HepG2 (cell line): ENCODE measurements at regions of chr15 and their contacts with region 1.

Region 1: DNA sequence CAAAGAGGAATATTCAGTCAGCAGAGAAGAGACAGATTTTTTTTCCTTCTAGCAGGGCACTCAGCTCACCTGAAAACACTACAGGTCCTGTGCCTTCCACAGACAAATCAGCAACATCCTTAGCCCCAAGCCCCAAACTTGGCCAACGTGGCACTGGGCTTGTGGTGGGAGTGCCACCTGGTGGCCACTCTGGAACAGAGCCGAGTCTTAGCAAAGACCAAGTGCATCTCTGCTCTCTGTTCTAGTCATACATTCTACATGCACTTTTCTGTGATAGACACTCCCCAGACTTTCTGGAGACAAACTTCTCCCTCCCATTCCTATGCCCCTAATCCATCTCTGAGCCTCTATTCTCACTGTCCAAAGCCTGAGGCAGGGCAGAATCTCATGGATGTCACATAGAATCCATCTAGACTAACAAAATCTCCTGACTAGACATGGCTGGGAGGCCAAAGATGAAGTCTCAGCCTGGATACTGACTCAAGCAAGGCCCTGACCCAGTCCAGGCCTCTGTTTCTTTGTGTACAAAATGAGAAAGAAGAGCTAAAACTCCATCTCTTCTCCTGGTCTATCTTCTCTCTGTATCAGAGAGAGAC is 5.1 kb upstream of the SEMA7A start:
- DNase-seq: peak; percentile 69
- ATAC-seq: 0 out of 3 replicates have a peak, but pooled peaks have one; percentile 7
- H3K4me3 ChIP-seq: no peak overlapping the region
- H3K27ac ChIP-seq: no peak overlapping the region
- H3K4me1 ChIP-seq: peaks cover 76% of the 10 kb centered on the region
- H3K27me3 ChIP-seq: no peaks in the 10 kb centered on the region
- CTCF ChIP-seq: peak; percentile 97
- EP300 ChIP-seq: no peak
- POLR2A ChIP-seq: no peak
- RAD21 ChIP-seq: peak; percentile 92

Region 2: DNA sequence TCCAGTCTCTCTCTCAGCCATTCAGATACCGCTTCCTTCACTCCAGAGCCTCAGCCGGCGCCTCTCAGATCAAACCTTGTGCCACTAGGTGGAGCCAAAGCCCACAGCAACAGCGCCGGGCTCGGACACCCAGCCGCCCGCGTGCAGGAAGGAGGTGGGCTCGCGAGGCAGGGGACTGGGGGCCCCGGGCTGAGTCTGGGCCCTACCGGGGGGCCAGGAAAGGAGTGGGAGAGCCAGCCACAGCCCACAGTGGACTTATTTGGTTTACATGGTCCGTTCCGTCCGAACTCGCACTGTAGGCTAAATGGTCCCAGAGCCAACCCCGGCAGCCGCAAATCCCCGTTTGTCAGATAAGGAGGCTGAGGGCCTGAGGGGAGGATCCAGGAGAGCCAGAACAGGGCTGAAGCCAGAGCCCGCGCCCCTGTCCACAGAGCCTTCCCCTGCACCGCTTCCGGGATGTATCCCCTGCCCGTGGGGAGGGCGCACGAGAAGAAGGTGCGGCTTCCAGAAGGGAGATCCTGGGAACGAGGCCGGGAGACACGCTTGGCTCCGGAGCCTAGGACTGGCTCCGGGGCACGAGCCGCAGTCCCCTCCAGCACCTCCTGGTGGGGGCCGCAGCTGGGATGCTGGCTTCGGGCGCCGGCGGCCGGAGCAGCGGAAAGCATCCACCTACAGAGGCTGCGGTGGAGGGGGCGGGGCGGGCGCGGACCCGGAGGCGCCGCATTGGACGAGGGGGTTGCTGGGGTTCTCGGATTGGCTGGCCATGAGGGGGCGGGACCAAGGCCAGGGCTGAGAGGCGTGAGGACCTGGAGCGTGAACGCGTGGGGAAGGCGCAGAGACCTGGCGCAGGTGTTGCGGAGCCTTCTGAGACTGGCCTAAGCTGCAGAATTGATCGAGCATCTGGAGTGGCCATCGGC is 64.8 kb before region 1 on chr15:
- CTCF ChIA-PET with region 1: interaction called, 21 read pairs
- POLR2A ChIA-PET with region 1: interaction called, 4 read pairs
- in situ Hi-C with region 1: no loop called
- intact Hi-C with region 1: no loop called
- DNase-seq: peak; percentile 83
- ATAC-seq: peak; percentile 96
- H3K4me3 ChIP-seq: peak overlapping the region; percentile 62 to 77 (median 66)
- H3K27ac ChIP-seq: no peak overlapping the region
- H3K4me1 ChIP-seq: peaks cover 32% of the 10 kb centered on the region
- H3K27me3 ChIP-seq: peaks cover 0 to 32% of the 10 kb centered on the region in 2 experiments; a peak in 4 of 5 replicates
- CTCF ChIP-seq: peak; percentile 97
- EP300 ChIP-seq: no peak
- POLR2A ChIP-seq: no peak
- RAD21 ChIP-seq: peak; percentile 94

Region 3: DNA sequence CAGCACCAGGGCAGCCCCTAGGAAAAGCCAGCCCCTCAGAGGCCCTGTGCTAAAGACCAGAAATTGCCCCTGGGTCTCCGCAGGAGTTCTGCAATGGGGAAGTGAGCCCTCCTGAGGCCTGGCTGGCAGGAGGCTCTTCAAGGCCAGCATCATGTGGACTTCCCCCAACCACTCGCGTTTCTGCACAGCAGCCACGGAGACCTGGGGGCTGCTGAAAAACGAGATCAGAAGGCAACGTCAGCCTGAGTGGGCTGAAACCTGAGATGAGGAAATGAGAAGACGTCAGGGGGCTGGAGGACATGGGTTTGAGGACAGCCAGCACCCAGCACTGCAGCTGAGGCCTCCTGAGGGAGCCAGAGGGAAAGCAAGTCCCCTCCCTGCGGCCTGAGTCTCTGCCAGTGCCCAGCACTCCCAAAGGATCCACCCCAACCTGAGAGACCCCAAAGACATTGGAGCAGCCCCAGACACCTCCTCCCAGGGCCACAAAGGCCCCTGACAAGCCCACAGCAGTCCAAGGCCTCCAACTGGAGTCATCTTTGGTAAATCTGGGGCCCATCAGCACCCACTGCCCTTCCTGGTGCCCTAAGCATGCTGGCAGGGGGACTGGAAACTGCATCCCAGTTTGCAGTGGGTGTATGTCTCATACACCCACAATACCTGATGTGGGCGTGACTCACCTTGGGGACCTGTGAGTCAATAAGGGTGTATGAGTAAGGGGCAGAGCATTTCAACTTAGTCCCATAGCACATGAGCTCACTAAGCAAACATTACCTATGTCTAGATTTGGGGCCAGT is 42.2 kb before region 1 on chr15:
- CTCF ChIA-PET with region 1: no interaction called
- POLR2A ChIA-PET with region 1: interaction called, 20 read pairs
- in situ Hi-C with region 1: no loop called
- intact Hi-C with region 1: no loop called
- DNase-seq: peak; percentile 84
- ATAC-seq: peak; percentile 65
- H3K4me3 ChIP-seq: peak overlapping the region in 1 of 3 experiments; percentile 34; a peak in 1 of 6 replicates
- H3K27ac ChIP-seq: no peak overlapping the region
- H3K4me1 ChIP-seq: peaks cover 52% of the 10 kb centered on the region
- H3K27me3 ChIP-seq: peaks cover 5 to 55% of the 10 kb centered on the region in 2 experiments; a peak in 3 of 5 replicates
- CTCF ChIP-seq: peak; percentile 44
- EP300 ChIP-seq: peak in 1 of 2 experiments; percentile 44; a peak in 1 of 4 replicates
- POLR2A ChIP-seq: no peak
- RAD21 ChIP-seq: no peak

Region 4: GRCh38 chr15:74422650-74423430 is 16.0 kb before region 1 on chr15:
- CTCF ChIA-PET with region 1: no interaction called
- POLR2A ChIA-PET with region 1: interaction called, 140 read pairs
- in situ Hi-C with region 1: no loop called
- intact Hi-C with region 1: no loop called
- DNase-seq: peak; percentile 82
- ATAC-seq: peak; percentile 68
- H3K4me3 ChIP-seq: peak overlapping the region in 1 of 3 experiments; percentile 30; a peak in 2 of 6 replicates
- H3K27ac ChIP-seq: peak overlapping the region; percentile 74
- H3K4me1 ChIP-seq: peaks cover 98% of the 10 kb centered on the region
- H3K27me3 ChIP-seq: no peaks in the 10 kb centered on the region
- CTCF ChIP-seq: 0 out of 2 replicates have a peak, but pooled peaks have one; percentile 9
- EP300 ChIP-seq: peak in 1 of 2 experiments; percentile 23; a peak in 1 of 4 replicates
- POLR2A ChIP-seq: no peak
- RAD21 ChIP-seq: no peak; the same call in 1 of the 2 replicates

Region 5: DNA sequence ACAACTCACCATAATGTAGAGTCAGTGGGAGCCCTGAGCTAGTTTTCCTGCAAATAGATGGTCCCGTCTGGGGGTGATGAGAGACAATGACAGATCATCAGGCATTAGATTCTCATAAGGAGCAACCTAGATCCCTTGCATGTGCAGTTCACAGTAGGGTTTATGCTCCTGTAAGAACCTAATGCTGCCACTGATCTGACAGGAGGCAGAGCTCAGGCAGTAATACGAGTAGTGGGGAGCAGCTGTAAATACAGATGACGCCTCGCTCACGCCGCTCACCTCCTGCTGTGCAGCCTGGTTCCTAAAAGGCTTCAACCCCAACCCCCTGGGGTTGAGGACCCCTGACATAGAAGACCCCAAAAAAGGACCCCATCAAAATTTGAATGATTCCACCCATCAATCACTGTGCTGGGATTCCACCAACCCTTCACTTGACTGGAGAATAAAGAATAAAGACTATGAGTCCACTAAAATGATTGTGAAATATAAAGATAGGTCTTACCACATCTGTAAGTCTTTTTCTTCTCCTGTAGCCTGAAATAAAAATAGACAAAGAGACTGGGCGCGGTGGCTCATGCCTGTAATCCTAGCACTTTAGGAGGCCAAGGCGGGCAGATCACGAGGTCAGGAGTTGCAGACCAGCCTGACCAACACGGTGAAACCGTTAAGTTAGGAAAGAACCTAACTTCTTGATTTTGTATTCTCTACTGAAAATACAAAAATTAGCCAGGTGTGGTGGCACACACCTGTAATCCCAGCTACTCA is 32.0 kb after region 1 on chr15:
- CTCF ChIA-PET with region 1: no interaction called
- POLR2A ChIA-PET with region 1: interaction called, 21 read pairs
- in situ Hi-C with region 1: no loop called
- intact Hi-C with region 1: no loop called
- DNase-seq: no peak
- ATAC-seq: no peak
- H3K4me3 ChIP-seq: no peak overlapping the region
- H3K27ac ChIP-seq: no peak overlapping the region
- H3K4me1 ChIP-seq: peaks cover 13% of the 10 kb centered on the region
- H3K27me3 ChIP-seq: no peaks in the 10 kb centered on the region
- CTCF ChIP-seq: no peak
- EP300 ChIP-seq: no peak
- POLR2A ChIP-seq: no peak
- RAD21 ChIP-seq: no peak

Region 6: DNA sequence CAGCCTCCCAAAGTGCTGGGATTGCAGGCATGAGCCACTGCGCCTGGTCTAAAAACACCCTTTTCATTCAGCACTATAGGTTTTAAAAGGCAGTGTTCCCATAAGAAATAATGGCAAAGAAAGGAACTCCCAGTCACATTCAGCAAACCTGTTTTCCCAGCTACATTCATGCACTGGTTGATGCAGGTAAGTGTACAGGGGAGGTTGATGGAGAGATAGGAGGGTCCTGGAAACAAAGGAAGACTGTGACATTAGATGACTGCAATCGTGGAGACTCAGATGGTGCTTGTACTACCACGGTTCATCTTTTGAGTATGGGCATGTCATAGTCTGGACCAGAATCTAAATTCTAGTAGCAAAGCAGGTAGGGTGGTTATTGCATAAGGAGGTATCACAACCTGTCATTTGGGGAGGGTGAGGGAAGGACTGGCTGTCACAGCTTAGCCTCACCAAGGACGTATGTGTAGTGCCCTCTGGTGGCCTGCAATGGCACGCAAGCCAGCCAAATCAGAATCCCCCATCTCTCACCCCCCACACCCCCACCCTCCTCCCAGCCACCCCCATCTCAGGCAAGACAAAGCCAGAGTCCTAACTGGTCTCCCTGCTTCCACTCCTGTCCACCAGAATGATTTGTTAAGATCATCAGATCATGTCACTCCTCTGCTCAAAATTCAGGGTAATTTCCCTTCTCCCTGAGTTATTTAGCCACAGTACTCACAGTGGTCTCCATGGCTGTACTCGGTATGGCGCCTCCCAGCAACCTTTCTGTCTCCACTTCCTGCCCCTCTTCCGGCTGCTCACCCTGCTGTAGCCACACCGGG is 50.9 kb after region 1 on chr15:
- CTCF ChIA-PET with region 1: interaction called, 12 read pairs
- POLR2A ChIA-PET with region 1: interaction called, 17 read pairs
- in situ Hi-C with region 1: no loop called
- intact Hi-C with region 1: loop called (anchors 2 kb)
- DNase-seq: peak; percentile 39
- ATAC-seq: peak; percentile 83
- H3K4me3 ChIP-seq: no peak overlapping the region
- H3K27ac ChIP-seq: no peak overlapping the region
- H3K4me1 ChIP-seq: no peaks in the 10 kb centered on the region
- H3K27me3 ChIP-seq: no peaks in the 10 kb centered on the region
- CTCF ChIP-seq: peak; percentile 81
- EP300 ChIP-seq: no peak
- POLR2A ChIP-seq: no peak
- RAD21 ChIP-seq: peak; percentile 64; the same call in 1 of the 2 replicates

Region 7: GRCh38 chr15:74598126-74598842 is 159.5 kb after region 1 on chr15:
- CTCF ChIA-PET with region 1: no interaction called
- POLR2A ChIA-PET with region 1: interaction called, 10 read pairs
- in situ Hi-C with region 1: no loop called
- intact Hi-C with region 1: no loop called
- DNase-seq: peak; percentile 84
- ATAC-seq: peak; percentile 95
- H3K4me3 ChIP-seq: peak overlapping the region; percentile 57 to 81 (median 63)
- H3K27ac ChIP-seq: peak overlapping the region; percentile 83
- H3K4me1 ChIP-seq: peaks cover 35% of the 10 kb centered on the region
- H3K27me3 ChIP-seq: 0 out of 5 replicates have a peak, but pooled peaks cover 0 to 1% of the 10 kb centered on the region in 2 experiments
- CTCF ChIP-seq: peak; percentile 15; the same call in 1 of the 2 replicates
- EP300 ChIP-seq: peak in 1 of 2 experiments; percentile 45; a peak in 1 of 4 replicates
- POLR2A ChIP-seq: peak; percentile 65 to 96
- RAD21 ChIP-seq: 0 out of 2 replicates have a peak, but pooled peaks have one; percentile 7